Motor neuron (in vitro differentiated cells): ENCODE measurements at regions of chr15 and their contacts with region 1.

Region 1: GRCh38 chr15:92069308-92070250 is 216.1 kb downstream of the SLCO3A1 start:
- ATAC-seq: peak; percentile 83 to 100 (median 94)
- H3K4me3 ChIP-seq: no peak overlapping the region
- H3K27ac ChIP-seq: no peak overlapping the region
- H3K4me1 ChIP-seq: peaks cover 12 to 27% of the 10 kb centered on the region in 2 donors

Region 2: GRCh38 chr15:91291673-91292072 is 777.9 kb before region 1 on chr15:
- in situ Hi-C with region 1: loop called in 2 of 9 experiments (anchors 10 to 25 kb)
- ATAC-seq: peak in 1 of 8 experiments; percentile 37
- H3K4me3 ChIP-seq: no peak overlapping the region
- H3K27ac ChIP-seq: no peak overlapping the region
- H3K4me1 ChIP-seq: peaks cover 10 to 19% of the 10 kb centered on the region in 2 donors

Region 3: DNA sequence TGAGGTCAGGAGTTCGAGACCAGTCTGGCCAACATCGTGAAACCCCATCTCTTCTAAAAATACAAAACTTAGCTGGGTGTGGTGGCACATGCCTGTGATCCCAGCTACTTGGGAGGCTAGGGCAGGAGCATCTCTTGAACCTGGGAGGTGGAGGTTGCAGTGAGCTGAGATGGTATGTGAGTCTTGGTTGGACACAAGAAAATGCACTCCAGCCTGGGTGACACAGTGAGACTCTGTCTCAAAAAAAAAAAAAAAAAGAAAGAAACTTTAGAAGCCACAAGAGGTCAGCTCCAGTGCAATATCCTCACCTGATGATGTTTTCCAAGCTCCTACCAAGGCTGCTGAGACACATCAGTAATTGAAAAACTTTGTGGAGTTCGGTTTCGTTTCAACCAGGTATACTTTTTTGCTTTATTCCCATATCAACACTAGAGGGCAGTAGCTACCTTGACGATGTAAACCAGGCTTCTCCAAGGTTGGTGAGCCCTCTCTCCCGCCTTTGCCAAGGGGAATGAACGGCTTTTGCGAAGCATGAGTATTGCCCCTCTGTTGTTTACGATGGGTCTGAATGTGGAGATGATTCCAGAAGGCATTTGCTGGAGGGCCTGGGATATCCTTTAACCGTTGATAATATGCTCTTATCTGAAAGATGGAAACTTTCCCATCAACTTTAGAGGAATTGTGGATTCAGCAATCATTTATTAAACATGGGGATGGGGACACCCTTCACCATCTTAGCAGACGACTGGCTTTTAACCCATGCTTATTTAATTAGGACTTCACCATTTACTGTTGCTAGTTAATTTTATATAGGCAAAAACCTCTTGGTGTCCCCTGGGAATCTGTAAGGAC is 766.8 kb before region 1 on chr15:
- in situ Hi-C with region 1: loop called in 5 of 9 experiments (anchors 10 to 25 kb)
- ATAC-seq: peak; percentile 50 to 86 (median 62)
- H3K4me3 ChIP-seq: no peak overlapping the region
- H3K27ac ChIP-seq: no peak overlapping the region
- H3K4me1 ChIP-seq: peaks cover 0 to 4% of the 10 kb centered on the region in 2 donors

Region 4: GRCh38 chr15:91852741-91853510 is 216.7 kb before region 1 on chr15:
- in situ Hi-C with region 1: loop called in 2 of 9 experiments (anchors 25 kb)
- ATAC-seq: peak; percentile 70 to 86 (median 80)
- H3K4me3 ChIP-seq: peak overlapping the region; percentile 55 to 94 (median 88)
- H3K27ac ChIP-seq: peak overlapping the region; percentile 62 to 78
- H3K4me1 ChIP-seq: peaks cover 21 to 25% of the 10 kb centered on the region in 2 donors

Region 5: GRCh38 chr15:92232317-92232716 is 162.7 kb after region 1 on chr15:
- in situ Hi-C with region 1: no loop called
- ATAC-seq: no peak
- H3K4me3 ChIP-seq: no peak overlapping the region
- H3K27ac ChIP-seq: no peak overlapping the region
- H3K4me1 ChIP-seq: no peaks in the 10 kb centered on the region